HepG2 (cell line): ENCODE measurements at regions of chr18 and their contacts with region 1.

Region 1: GRCh38 chr18:63570716-63571115 is 16.4 kb upstream of the SERPINB13 start:
- DNase-seq: no peak
- ATAC-seq: no peak
- H3K4me3 ChIP-seq: no peak overlapping the region
- H3K27ac ChIP-seq: no peak overlapping the region
- H3K4me1 ChIP-seq: no peaks in the 10 kb centered on the region
- H3K27me3 ChIP-seq: peaks cover 0 to 3% of the 10 kb centered on the region in 2 experiments; a peak in 2 of 5 replicates
- CTCF ChIP-seq: no peak
- EP300 ChIP-seq: no peak
- POLR2A ChIP-seq: no peak
- RAD21 ChIP-seq: no peak

Region 2: DNA sequence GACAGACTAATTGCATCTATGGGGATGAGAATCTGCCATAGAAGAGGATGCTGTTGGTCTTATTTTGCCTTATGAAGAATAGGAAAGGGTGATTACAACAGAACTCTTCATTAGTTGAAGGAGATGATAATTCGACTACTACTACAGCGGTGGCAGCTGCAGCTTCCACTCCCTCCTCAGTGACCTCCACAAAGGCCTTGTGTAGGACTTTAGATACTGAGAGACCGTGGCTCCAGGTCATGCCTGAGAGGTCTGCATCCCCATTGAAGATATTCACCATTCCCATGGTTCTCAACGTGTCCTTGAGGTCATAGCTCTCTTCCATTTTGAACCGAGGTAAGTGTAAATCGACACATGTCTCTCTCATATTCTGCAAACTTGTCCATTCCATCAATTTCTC is 67.0 kb after region 1 on chr18:
- CTCF ChIA-PET with region 1: no interaction called
- POLR2A ChIA-PET with region 1: no interaction called
- in situ Hi-C with region 1: no loop called
- intact Hi-C with region 1: loop called (anchors 2 kb)
- DNase-seq: no peak
- ATAC-seq: no peak
- H3K4me3 ChIP-seq: no peak overlapping the region
- H3K27ac ChIP-seq: no peak overlapping the region
- H3K4me1 ChIP-seq: no peaks in the 10 kb centered on the region
- H3K27me3 ChIP-seq: no peaks in the 10 kb centered on the region
- CTCF ChIP-seq: no peak
- EP300 ChIP-seq: no peak
- POLR2A ChIP-seq: no peak
- RAD21 ChIP-seq: no peak